Left ventricle myocardium inferior (tissue), 1 donor: ENCODE measurements at regions of chr6 and their contacts with region 1.

Region 1: GRCh38 chr6:154733012-154733625 is at the start of gene SCAF8:
- DNase-seq: peak; percentile 86
- H3K4me3 ChIP-seq: peak within 1 kb of the TSS; percentile 86
- H3K27ac ChIP-seq: peak within 1 kb of the TSS; percentile 99
- H3K4me1 ChIP-seq: peaks cover 59% of the 10 kb centered on the region
- H3K27me3 ChIP-seq: no peaks in the 10 kb centered on the region
- CTCF ChIP-seq: peak; percentile 91
- total RNA-seq, gene SCAF8: 54.2 TPM

Region 2: GRCh38 chr6:154791556-154792317 is 58.6 kb after region 1 on chr6:
- intact Hi-C with region 1: loop called (anchors 10 kb)
- DNase-seq: no peak
- H3K4me3 ChIP-seq: no peak overlapping the region
- H3K27ac ChIP-seq: no peak overlapping the region
- H3K4me1 ChIP-seq: peaks cover 31% of the 10 kb centered on the region
- H3K27me3 ChIP-seq: no peaks in the 10 kb centered on the region
- CTCF ChIP-seq: no peak